Right ventricle myocardium inferior (tissue), 1 donor: ENCODE measurements at regions of chr1 and their contacts with region 1.

Region 1: GRCh38 chr1:16078925-16079656 is 5.6 kb upstream of the FAM131C start:
- DNase-seq: peak; percentile 65
- ATAC-seq: peak; percentile 71

Region 2: DNA sequence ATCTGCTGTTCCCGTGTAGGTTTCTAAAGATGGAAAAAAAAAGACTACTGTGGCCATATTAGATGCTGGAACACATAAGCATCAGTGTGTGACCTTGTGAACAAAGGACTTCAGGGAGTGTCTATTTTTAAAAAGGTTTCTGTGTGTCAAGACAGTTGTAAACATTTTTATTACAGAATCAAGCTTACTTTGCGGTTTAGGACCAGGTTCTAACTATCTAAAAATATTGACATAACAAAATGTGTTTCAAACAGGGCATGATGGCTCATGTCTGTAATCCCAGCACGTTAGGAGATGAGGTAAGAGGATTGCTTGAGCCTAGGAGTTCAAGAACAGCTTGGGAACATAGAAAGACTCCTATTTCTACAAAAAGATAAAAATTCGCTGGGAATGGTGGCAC is 468.9 kb before region 1 on chr1:
- intact Hi-C with region 1: no loop called
- DNase-seq: no peak
- ATAC-seq: no peak

Region 3: DNA sequence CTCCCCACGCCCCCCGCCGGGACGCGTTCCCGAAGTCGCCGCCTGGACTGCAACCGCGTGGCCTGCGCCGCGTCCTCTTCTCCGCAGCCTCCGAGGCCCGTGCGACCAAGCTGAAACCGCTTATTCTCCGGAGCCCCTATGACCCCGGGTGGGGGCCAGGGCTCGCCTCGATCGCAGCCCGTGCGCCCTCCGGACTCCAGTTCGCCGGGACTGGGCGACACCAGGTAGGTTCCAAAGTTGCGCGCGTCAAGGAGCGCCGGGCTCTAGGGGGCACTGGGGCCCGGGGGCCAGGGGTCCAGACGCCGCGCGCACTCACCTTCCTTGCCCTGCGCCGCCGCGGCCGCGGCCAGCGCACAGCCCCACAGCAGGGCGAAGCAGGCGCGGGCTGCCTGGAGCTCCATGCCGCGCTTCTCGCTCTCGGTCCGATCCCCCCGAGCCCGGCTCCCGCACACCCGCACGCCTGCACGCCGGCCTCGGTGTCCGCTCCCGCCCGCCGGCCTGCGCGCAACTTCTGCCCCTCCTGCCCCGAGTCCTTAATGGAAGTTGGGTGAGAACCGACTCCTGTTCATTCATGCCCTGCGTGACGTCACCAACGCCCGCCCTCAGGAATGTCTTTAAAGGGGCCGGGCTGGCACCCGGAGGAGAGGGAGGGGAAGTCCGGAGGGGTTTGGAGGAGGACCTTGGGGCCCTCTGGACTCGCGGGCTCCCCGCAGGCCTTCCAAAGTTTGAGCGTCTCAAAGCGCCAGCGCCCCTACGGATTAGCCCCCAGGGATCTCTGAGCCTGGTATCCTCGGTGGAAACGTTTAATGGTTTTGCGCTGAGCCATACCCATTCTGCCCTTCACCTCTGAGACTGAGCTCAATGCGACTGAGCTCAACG is 76.7 kb after region 1 on chr1 and contains the start of gene EPHA2:
- intact Hi-C with region 1: loop called (anchors 2 kb)
- DNase-seq: peak; percentile 95
- ATAC-seq: peak; percentile 77
- total RNA-seq, gene EPHA2: 7.3 TPM

Region 4: GRCh38 chr1:16187748-16188401 is 108.8 kb after region 1 on chr1:
- intact Hi-C with region 1: loop called (anchors 1 kb)
- DNase-seq: no peak
- ATAC-seq: peak; percentile 85

Region 5: GRCh38 chr1:16243936-16244649 is 165.0 kb after region 1 on chr1:
- intact Hi-C with region 1: loop called (anchors 2 kb)
- DNase-seq: peak; percentile 81
- ATAC-seq: peak; percentile 21

Region 6: DNA sequence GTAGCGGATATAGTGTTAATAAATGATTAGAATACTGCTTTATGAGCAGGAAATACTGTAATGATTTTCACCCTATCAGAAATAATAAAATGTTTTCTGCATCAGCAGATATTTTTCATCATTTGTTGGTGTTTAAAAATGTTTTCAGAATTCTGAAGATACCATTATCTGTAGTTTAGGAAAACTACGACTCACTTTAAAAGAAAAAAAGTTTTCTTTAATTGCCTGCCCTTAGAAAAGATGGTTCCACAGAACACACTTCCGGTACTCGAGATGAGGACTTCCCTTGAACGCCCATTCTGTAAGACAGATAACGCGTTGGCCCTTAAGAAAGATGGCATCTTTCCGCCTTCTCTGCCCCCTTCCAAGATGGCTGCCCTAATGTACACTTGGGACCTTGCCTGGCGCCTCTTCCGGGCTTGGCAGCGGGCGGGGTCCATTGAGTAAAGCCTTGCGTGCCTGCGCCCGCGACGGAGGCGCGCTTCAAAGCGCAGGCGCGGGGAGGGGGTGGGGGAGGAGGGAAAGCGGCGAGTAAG is 287.7 kb after region 1 on chr1 and contains the start of gene SZRD1:
- intact Hi-C with region 1: loop called (anchors 5 kb)
- DNase-seq: peak; percentile 98
- ATAC-seq: peak; percentile 90
- total RNA-seq, gene SZRD1: 108 TPM